BJ (cell line): ENCODE measurements at regions of chr5 and their contacts with region 1.

Region 1: DNA sequence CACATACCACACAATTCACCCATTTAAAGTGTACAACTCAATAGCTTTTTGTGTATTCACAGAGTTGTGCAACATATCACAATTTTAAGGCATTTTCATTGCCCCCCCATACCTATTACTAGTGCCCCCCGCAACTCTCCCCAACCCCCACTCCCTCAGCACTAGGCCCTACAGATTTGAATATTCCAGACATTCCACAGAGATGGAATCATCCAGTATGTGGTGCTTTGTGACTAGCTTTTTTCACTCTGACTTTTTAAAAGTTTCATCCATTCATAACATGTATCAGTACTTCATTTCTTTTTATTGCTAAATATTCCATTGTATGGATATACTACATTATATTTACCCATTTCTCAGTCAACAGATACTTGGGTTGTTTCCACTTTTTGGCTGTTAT is 102.9 kb upstream of the LRRTM2 start:
- DNase-seq: no peak
- H3K4me3 ChIP-seq: no peak overlapping the region
- H3K27me3 ChIP-seq: no peaks in the 10 kb centered on the region
- CTCF ChIP-seq: no peak

Region 2: GRCh38 chr5:138772986-138773594 is 205.0 kb before region 1 on chr5:
- CTCF ChIA-PET with region 1: no interaction called
- POLR2A ChIA-PET with region 1: interaction called, 21 read pairs
- DNase-seq: no peak
- H3K4me3 ChIP-seq: no peak overlapping the region
- H3K27me3 ChIP-seq: no peaks in the 10 kb centered on the region
- CTCF ChIP-seq: no peak

Region 3: GRCh38 chr5:138900281-138900965 is 77.7 kb before region 1 on chr5:
- CTCF ChIA-PET with region 1: no interaction called
- POLR2A ChIA-PET with region 1: no interaction called
- DNase-seq: no peak
- H3K4me3 ChIP-seq: no peak overlapping the region
- H3K27me3 ChIP-seq: no peaks in the 10 kb centered on the region
- CTCF ChIP-seq: no peak